Calu3 (cell line): ENCODE measurements at regions of chr15 and their contacts with region 1.

Region 1: GRCh38 chr15:91942676-91943576 is 89.4 kb downstream of the SLCO3A1 start:
- DNase-seq: peak; percentile 88
- H3K4me3 Mint-ChIP-seq: peak overlapping the region; percentile 72
- H3K27ac Mint-ChIP-seq: peak overlapping the region; percentile 90
- H3K4me1 Mint-ChIP-seq: peaks cover 98% of the 10 kb centered on the region
- H3K27me3 Mint-ChIP-seq: no peaks in the 10 kb centered on the region
- CTCF ChIP-seq: no peak

Region 2: GRCh38 chr15:91469632-91470567 is 473.0 kb before region 1 on chr15:
- CTCF ChIA-PET with region 1: no interaction called
- intact Hi-C with region 1: loop called (anchors 10 kb)
- DNase-seq: no peak
- H3K4me3 Mint-ChIP-seq: no peak overlapping the region
- H3K27ac Mint-ChIP-seq: no peak overlapping the region
- H3K4me1 Mint-ChIP-seq: peaks cover 21% of the 10 kb centered on the region
- H3K27me3 Mint-ChIP-seq: no peaks in the 10 kb centered on the region
- CTCF ChIP-seq: no peak

Region 3: DNA sequence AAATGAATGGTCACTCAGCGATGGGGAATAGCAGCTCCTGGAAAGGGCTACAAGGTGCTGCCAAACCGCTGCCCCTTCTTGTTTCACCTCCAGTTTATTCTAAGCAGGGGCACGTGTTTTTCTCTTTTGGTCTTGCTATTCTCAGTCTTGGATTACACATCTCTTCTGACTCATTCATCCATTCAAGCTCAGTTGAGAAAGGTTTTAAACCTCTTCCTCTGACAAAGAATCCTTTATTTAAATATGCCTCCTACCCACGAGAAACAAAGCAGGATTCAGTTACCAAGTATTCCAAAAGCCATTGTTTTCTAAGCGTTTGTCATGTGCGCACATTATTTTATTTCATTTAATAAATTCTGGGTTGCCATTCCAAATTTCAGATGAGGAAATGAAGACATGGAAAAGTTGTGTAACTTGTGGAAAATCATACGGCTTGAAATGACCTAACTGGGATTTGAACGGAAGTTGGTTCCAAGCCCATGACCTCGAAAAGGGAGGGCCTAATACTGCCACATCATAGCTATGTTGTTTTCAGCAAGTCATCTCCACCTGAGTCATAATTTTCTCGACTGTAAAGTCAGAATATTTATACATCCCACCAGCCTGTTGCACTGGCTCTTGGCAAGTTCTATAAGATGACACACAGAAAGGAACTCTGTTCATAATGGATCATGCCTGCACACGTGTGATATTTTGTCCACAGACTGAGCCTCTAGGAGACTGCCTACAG is 381.4 kb before region 1 on chr15:
- CTCF ChIA-PET with region 1: no interaction called
- intact Hi-C with region 1: loop called (anchors 10 kb)
- DNase-seq: peak; percentile 51
- H3K4me3 Mint-ChIP-seq: peak overlapping the region; percentile 59
- H3K27ac Mint-ChIP-seq: peak overlapping the region; percentile 98
- H3K4me1 Mint-ChIP-seq: peaks cover 33% of the 10 kb centered on the region
- H3K27me3 Mint-ChIP-seq: no peaks in the 10 kb centered on the region
- CTCF ChIP-seq: no peak

Region 4: DNA sequence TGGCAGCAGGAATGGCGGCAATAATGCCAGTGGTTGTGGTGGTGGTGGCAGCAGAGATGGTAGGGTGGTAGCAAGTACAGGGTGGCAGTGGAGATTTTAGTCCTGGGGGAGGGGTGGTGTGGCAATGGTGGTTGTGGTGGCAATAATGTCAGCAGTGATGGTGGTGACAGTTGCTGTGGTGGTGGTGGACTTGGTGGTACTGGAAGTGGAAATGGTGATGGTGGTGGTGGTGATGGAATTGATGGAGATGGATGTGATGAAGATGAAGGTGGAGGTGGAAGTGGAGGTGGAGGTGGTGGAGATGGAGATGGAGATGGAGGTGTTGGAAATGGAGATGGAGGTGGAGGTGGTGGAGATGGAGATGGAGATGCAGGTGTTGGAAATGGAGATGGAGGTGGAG is 194.0 kb before region 1 on chr15:
- CTCF ChIA-PET with region 1: no interaction called
- intact Hi-C with region 1: no loop called
- DNase-seq: no peak
- H3K4me3 Mint-ChIP-seq: no peak overlapping the region
- H3K27ac Mint-ChIP-seq: no peak overlapping the region
- H3K4me1 Mint-ChIP-seq: no peaks in the 10 kb centered on the region
- H3K27me3 Mint-ChIP-seq: peaks cover 17% of the 10 kb centered on the region
- CTCF ChIP-seq: no peak

Region 5: GRCh38 chr15:91852741-91853510 is 90.0 kb before region 1 on chr15:
- CTCF ChIA-PET with region 1: interaction called, 53 read pairs
- intact Hi-C with region 1: loop called (anchors 1 kb)
- DNase-seq: peak; percentile 87
- H3K4me3 Mint-ChIP-seq: peak overlapping the region; percentile 84
- H3K27ac Mint-ChIP-seq: peak overlapping the region; percentile 78
- H3K4me1 Mint-ChIP-seq: peaks cover 45% of the 10 kb centered on the region
- H3K27me3 Mint-ChIP-seq: no peaks in the 10 kb centered on the region
- CTCF ChIP-seq: peak; percentile 95

Region 6: GRCh38 chr15:91890614-91891013 is 52.3 kb before region 1 on chr15:
- CTCF ChIA-PET with region 1: interaction called, 10 read pairs
- intact Hi-C with region 1: no loop called
- DNase-seq: peak; percentile 78
- H3K4me3 Mint-ChIP-seq: no peak overlapping the region
- H3K27ac Mint-ChIP-seq: peak overlapping the region; percentile 67
- H3K4me1 Mint-ChIP-seq: peaks cover 60% of the 10 kb centered on the region
- H3K27me3 Mint-ChIP-seq: no peaks in the 10 kb centered on the region
- CTCF ChIP-seq: no peak